ENCODE measurements at regions of chr10 and their contacts with region 1.

Region 1: DNA sequence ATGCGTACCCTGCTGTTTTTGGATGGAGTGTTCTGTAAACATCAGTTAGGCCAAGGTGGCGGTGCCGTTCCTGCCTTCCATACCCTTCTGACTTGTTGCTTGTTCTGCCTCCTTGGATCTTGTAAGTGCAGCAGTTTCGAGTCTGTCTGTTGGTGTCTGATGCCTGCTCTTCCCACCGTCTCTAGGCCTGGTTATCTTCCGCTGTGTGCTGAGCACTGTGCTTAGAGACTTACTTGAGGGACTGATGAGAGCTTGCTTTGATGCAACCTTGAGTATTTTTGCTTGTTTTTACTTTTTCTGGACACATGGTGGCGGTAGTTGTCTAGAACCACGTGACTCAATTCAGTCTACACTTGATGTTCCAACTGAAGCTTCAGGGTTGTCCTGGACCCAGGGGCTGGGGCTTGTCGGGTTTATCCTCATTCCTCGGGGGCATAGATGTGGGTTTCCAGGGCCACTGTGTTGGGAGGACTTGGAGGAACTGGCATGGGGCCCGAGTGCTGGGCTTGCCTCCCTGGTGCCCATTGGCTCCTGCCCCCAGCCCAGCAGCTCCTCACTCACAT is 14.4 kb upstream of the SPRN start:
- DNase-seq: peak in 1 of 2 experiments; percentile 45
- H3K4me3 ChIP-seq: no peak overlapping the region
- H3K4me3 Mint-ChIP-seq: no peak overlapping the region
- H3K27ac Mint-ChIP-seq: no peak overlapping the region
- H3K4me1 ChIP-seq: peaks cover 3% of the 10 kb centered on the region; the same call in 1 of the 2 replicates
- H3K4me1 Mint-ChIP-seq: peaks cover 9% of the 10 kb centered on the region
- H3K27me3 ChIP-seq: no peaks in the 10 kb centered on the region
- H3K27me3 Mint-ChIP-seq: peaks cover 4% of the 10 kb centered on the region
- CTCF ChIP-seq: peak; percentile 30 to 55

Region 2: GRCh38 chr10:133394064-133394663 is 44.6 kb before region 1 on chr10 and contains the start of gene MTG1:
- CTCF ChIA-PET with region 1: no interaction called
- POLR2A ChIA-PET with region 1: no interaction called
- intact Hi-C with region 1: no loop called
- DNase-seq: peak; percentile 95 to 100
- H3K4me3 ChIP-seq: peak within 1 kb of the TSS; percentile 79
- H3K4me3 Mint-ChIP-seq: peak within 1 kb of the TSS; percentile 81
- H3K27ac Mint-ChIP-seq: peak within 1 kb of the TSS; percentile 86
- H3K4me1 ChIP-seq: 0 out of 2 replicates have a peak, but pooled peaks cover 4% of the 10 kb centered on the region
- H3K4me1 Mint-ChIP-seq: no peaks in the 10 kb centered on the region
- H3K27me3 ChIP-seq: no peaks in the 10 kb centered on the region
- H3K27me3 Mint-ChIP-seq: no peaks in the 10 kb centered on the region
- CTCF ChIP-seq: peak in 1 of 2 experiments; percentile 54
- total RNA-seq, gene MTG1: 111 and 113 TPM in 2 replicates

Region 3: GRCh38 chr10:133422821-133423771 is 15.7 kb before region 1 on chr10:
- CTCF ChIA-PET with region 1: no interaction called
- POLR2A ChIA-PET with region 1: no interaction called
- intact Hi-C with region 1: no loop called
- DNase-seq: no peak
- H3K4me3 ChIP-seq: peak overlapping the region; percentile 22
- H3K4me3 Mint-ChIP-seq: peak overlapping the region; percentile 61
- H3K27ac Mint-ChIP-seq: no peak overlapping the region
- H3K4me1 ChIP-seq: peaks cover 5% of the 10 kb centered on the region; the same call in 1 of the 2 replicates
- H3K4me1 Mint-ChIP-seq: no peaks in the 10 kb centered on the region
- H3K27me3 ChIP-seq: no peaks in the 10 kb centered on the region
- H3K27me3 Mint-ChIP-seq: no peaks in the 10 kb centered on the region
- CTCF ChIP-seq: no peak

Region 4: DNA sequence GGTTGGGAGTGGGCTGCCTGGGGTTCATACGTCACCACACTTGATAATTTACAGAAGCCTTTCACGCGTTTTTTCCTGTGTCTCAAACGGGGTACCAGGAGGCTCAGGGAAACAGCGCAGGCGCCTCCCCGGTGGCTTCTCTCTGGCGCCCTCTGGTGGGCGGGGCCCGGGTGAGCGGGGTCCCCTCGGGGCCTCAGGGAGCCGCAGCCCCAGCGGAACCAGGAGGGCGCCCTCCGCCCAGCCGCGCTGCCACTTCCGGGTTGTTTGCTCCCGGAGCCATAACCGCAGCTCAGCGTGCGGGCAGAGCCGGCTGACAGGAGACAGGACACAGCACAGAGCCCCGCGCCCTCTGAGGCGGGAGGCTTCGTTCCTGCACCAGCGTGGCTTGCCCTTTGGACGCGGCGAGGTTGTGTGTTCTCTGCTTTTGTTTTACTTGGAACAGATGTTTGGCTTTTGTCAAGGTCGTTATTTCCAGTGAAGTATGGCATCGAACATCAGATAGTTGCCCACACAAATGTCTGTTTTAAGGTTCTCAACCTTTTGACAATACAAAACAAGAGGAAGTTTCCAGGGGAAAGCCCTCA is 81.5 kb after region 1 on chr10:
- CTCF ChIA-PET with region 1: interaction called, 7 read pairs
- POLR2A ChIA-PET with region 1: no interaction called
- intact Hi-C with region 1: loop called (anchors 1 kb)
- DNase-seq: peak; percentile 92 to 98
- H3K4me3 ChIP-seq: peak overlapping the region; percentile 61
- H3K4me3 Mint-ChIP-seq: peak overlapping the region; percentile 72
- H3K27ac Mint-ChIP-seq: peak overlapping the region; percentile 30
- H3K4me1 ChIP-seq: peaks cover 11% of the 10 kb centered on the region
- H3K4me1 Mint-ChIP-seq: peaks cover 11% of the 10 kb centered on the region
- H3K27me3 ChIP-seq: no peaks in the 10 kb centered on the region
- H3K27me3 Mint-ChIP-seq: peaks cover 15% of the 10 kb centered on the region
- CTCF ChIP-seq: peak; percentile 96 to 98

Region 5: DNA sequence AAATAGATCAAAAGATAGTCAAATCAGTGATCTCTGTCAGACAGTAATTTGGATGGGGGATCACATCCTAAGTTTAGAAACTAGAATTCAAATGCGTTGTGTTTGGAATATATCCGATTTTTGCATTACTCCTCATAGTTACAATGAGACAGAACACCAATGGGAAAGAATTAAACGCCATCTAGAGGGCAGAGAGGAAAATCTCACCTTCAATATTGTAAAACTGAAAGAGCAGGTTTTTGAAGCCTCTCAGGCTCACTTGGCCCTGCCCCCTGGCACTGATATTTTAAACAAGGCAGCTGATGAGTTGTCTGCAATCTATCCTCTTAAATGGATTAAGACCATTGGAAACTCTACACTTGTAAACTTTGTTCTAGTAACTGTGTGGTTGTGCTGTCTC is 170.1 kb after region 1 on chr10:
- CTCF ChIA-PET with region 1: no interaction called
- POLR2A ChIA-PET with region 1: no interaction called
- intact Hi-C with region 1: loop called (anchors 5 kb)
- DNase-seq: no peak
- H3K4me3 ChIP-seq: no peak overlapping the region
- H3K4me3 Mint-ChIP-seq: no peak overlapping the region
- H3K27ac Mint-ChIP-seq: no peak overlapping the region
- H3K4me1 ChIP-seq: no peaks in the 10 kb centered on the region
- H3K4me1 Mint-ChIP-seq: no peaks in the 10 kb centered on the region
- H3K27me3 ChIP-seq: no peaks in the 10 kb centered on the region; the same call in none of the 2 replicates
- H3K27me3 Mint-ChIP-seq: peaks cover 14% of the 10 kb centered on the region
- CTCF ChIP-seq: peak; percentile 31 to 42

Measured in Caco-2 (cell line).